ENCODE measurements at regions of chr15 and their contacts with region 1.

Region 1: DNA sequence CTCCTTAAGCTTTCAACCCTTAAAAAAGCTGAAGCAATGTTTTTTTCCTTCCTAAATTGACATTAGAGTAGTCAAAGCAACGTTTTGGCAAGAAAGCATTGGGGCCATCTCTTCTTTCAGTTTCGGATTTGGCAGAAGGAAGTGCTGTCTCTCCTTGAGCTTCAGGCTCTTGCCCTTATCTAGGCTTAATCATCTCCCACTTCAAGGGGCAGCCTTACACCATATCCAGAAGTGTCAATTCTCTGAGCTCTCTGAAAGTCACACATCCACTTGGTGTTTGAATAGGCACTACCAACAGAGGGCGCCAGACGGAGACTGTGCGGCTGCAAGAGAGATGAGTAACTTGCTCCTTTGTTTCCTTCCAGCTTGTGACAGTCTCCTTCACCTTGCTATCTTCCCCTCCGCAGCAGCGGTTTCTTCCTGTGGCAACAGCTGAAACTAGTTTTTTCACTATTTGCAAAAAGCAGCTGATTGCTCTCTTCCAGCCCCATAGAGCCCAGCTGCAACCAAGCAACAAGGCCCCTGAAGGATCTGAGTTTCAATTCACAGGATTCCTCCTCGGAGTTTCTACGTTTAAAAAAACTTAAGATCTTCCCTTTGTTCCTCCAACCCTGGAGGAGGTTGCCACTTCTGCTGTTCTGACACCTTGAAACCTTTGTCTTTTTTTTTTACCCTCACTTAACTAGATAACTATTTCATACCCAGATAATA is 147.0 kb upstream of the SLCO3A1 start:
- DNase-seq: peak; percentile 79
- ATAC-seq: peak; percentile 99
- H3K4me3 Mint-ChIP-seq: peak overlapping the region; percentile 71
- H3K27ac Mint-ChIP-seq: peak overlapping the region; percentile 90
- H3K4me1 Mint-ChIP-seq: peaks cover 33% of the 10 kb centered on the region
- H3K27me3 Mint-ChIP-seq: peaks cover 17% of the 10 kb centered on the region

Region 2: DNA sequence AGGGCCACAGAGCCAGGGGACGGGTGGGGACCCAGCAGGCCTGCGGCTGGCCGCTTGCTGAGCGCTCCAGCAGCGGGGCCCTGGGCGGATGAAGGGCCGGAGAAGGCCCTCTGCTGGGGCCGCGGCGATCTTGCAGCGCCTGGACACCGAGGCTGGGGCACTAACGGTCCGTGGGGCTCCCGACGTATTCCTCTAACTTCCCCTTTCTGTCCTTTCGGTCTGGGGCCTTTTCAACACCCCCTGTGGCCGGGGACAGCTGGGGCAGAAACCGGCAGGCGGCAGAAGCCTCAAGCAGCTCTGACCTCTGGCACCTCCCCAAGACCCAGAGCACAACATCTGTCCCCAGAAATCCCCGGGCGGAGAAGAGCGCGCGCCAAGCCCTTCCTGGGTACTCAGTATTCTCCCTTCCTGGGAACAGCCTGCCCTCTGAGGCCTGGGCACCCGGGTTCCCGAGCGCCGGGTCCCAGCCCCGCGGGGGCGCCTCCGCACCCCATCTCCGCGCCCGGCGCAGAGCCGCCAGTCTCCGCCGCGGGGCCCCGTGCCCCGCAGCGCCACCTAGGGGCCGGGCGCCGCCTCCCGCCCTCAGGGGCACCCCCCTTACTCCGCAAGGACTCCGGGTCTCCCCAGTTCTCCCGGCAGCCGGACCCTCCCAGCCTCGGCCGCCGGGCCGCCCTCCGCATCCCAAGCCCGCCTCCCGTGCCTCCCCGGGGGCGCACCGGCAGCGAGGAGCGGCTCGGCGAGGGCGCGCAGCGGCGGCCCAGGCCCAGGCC is 146.4 kb after region 1 on chr15:
- POLR2A ChIA-PET with region 1: interaction called, 13 read pairs
- DNase-seq: peak; percentile 90
- ATAC-seq: peak; percentile 76
- H3K4me3 Mint-ChIP-seq: peak overlapping the region; percentile 91
- H3K27ac Mint-ChIP-seq: peak overlapping the region; percentile 85
- H3K4me1 Mint-ChIP-seq: peaks cover 49% of the 10 kb centered on the region
- H3K27me3 Mint-ChIP-seq: peaks cover 7% of the 10 kb centered on the region

Measured in activated naive CD8-positive, alpha-beta T cell treated with anti-CD3 and anti-CD28 coated beads, Interleukin-2, amount 10 ng/mL, durations not matched to agents 7 days and 5 days (primary cell).